ENCODE measurements at regions of chr7 and their contacts with region 1.

Region 1: DNA sequence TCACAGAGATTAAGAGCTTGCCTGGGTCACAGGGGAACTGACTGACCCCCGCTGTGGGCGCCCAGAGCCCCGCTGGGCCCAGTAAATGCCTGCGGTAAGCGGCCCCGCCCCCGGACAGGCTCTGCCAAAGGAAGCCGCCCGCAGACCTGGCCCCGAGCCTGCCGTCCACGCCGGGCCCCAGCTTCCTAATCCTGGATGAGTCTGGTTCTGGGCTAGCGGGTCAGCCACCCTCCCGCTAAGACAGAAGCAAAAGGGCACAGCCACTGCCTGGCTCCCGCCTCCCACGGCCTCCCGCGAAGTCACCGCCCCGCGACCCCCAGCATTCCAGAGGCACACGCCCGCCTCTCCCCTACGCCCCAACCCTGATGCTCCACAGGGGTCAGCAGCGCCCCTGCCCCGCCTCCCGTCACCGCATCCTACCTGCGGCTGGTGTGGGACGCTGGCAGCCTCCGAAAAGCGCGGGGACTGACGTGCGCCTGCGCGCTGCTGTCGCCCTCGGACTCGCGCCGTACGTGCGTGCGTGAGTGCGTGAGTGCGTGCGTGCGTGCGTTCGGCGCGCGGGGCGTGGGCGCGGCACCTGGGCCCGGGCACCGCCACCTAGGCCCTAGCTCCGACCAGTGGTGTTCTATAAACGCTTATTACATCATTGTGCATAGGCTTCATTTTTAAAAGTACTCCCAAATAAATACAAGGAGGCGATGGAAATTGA is at the start of gene FIGNL1:
- DNase-seq: peak; percentile 92
- ATAC-seq: peak; percentile 87
- H3K4me3 Mint-ChIP-seq: peak within 1 kb of the TSS; percentile 70
- H3K27ac Mint-ChIP-seq: peak within 1 kb of the TSS; percentile 93
- H3K4me1 Mint-ChIP-seq: peaks cover 46% of the 10 kb centered on the region
- H3K27me3 Mint-ChIP-seq: no peaks in the 10 kb centered on the region
- total RNA-seq, gene FIGNL1: 46.9 to 49.3 TPM

Region 2: DNA sequence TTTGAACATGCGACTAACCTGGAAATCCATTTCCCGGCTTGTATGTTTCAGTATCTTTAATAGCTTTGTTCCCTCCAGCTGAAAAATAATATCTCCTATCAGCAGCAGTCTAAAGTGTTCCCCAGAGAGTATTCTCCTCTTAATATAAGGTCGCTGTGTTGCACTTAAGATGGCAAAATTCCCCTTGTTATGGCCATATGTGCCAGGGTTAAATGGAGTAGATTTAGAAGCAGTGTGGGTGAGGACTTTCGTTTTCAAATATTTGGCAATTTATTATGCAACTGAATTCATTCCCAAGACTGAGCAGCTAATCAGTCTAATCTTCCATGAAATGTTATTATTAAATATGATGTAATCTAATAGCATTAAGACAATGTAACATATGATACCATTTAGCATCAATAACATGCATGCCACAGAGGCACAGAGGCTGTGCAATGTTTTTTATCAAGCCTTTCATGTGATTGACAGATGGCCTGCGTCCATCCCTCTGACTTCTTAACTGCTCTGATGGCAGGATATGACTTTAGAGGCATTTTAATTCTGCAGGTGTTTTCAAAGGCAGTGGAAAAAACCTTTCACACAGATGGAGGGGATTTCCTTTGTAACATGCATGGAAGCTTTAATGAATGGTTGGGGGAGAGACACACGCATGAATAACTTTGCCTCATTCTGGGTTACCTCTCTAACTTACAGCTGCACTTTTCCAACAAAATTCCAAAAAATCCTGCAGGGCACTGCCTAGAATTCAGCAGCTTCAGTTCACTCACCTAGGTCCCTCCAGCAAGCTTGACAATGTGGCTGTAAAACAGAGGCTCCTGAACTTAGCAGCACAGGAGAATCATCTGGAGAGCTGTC is 301.9 kb before region 1 on chr7:
- CTCF ChIA-PET with region 1: interaction called, 5 read pairs
- POLR2A ChIA-PET with region 1: interaction called, 3 read pairs
- intact Hi-C with region 1: loop called (anchors 2 to 10 kb)
- DNase-seq: peak; percentile 65
- ATAC-seq: peak; percentile 89
- H3K4me3 Mint-ChIP-seq: peak overlapping the region; percentile 40
- H3K27ac Mint-ChIP-seq: peak overlapping the region; percentile 90
- H3K4me1 Mint-ChIP-seq: peaks cover 85% of the 10 kb centered on the region
- H3K27me3 Mint-ChIP-seq: no peaks in the 10 kb centered on the region

Region 3: GRCh38 chr7:50266635-50267386 is 183.2 kb before region 1 on chr7:
- CTCF ChIA-PET with region 1: interaction called, 3 read pairs
- POLR2A ChIA-PET with region 1: no interaction called
- intact Hi-C with region 1: loop called in 1 of 2 experiments (anchors 2 kb)
- DNase-seq: peak; percentile 87
- ATAC-seq: peak; percentile 77
- H3K4me3 Mint-ChIP-seq: peak overlapping the region; percentile 58
- H3K27ac Mint-ChIP-seq: peak overlapping the region; percentile 98
- H3K4me1 Mint-ChIP-seq: peaks cover 94% of the 10 kb centered on the region
- H3K27me3 Mint-ChIP-seq: no peaks in the 10 kb centered on the region

Region 4: DNA sequence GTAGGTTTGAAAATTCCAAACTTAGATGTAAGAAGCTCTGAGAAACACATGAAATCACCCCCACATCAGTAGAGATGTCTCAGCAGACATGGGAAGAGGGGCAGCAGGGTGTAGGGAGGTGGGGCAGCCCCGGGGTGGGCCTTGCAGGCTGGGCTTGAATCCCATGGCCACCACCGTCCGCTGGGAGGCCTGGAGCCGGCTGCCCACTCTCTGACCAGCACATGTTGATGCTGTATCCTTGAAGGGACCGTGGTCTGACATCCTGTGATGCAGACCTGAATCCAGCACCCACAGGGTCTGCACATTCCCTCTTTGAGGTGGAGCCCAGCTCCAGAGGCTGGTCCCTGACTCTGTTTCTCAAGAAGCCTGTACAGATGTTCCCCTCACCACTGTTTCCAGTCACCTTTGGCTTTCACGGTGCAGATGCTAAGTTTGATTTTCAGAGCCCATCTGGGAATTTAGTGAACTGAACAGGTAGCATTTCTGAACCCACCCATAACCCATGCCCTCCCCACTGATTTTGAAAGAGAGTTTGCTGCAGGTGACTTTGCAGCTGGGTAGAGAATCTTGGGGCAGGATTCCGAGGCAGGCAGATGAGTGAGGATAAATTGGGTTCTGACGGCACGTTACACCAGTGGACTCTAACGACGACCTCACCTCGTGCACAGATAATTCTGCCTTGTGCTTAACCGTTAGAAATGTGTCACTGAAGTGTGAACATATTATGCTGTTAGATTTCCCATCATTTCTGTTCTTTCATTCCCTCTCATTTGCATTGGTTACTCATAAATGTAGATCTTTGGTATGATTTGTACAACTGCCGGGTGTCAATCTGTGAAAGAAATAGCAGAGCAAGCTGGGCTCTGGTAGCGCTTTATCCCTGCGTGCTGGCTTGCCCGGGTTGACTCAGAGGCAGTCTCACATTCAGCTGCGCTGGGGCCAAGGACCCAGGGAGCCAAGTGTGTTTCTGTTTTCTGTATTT is 99.8 kb before region 1 on chr7:
- CTCF ChIA-PET with region 1: interaction called, 3 read pairs
- POLR2A ChIA-PET with region 1: no interaction called
- intact Hi-C with region 1: loop called in 1 of 2 experiments (anchors 1 kb)
- DNase-seq: peak; percentile 93
- ATAC-seq: peak; percentile 71
- H3K4me3 Mint-ChIP-seq: peak overlapping the region; percentile 61
- H3K27ac Mint-ChIP-seq: peak overlapping the region; percentile 100
- H3K4me1 Mint-ChIP-seq: peaks cover 97% of the 10 kb centered on the region
- H3K27me3 Mint-ChIP-seq: no peaks in the 10 kb centered on the region

Region 5: GRCh38 chr7:50467817-50468610 is 18.0 kb after region 1 on chr7:
- CTCF ChIA-PET with region 1: interaction called, 7 read pairs
- POLR2A ChIA-PET with region 1: no interaction called
- intact Hi-C with region 1: loop called in 1 of 2 experiments (anchors 2 kb)
- DNase-seq: peak; percentile 92
- ATAC-seq: peak; percentile 95
- H3K4me3 Mint-ChIP-seq: peak overlapping the region; percentile 11
- H3K27ac Mint-ChIP-seq: peak overlapping the region; percentile 59
- H3K4me1 Mint-ChIP-seq: peaks cover 13% of the 10 kb centered on the region
- H3K27me3 Mint-ChIP-seq: peaks cover 5% of the 10 kb centered on the region

Region 6: GRCh38 chr7:51123322-51124029 is 673.4 kb after region 1 on chr7:
- CTCF ChIA-PET with region 1: no interaction called
- POLR2A ChIA-PET with region 1: no interaction called
- intact Hi-C with region 1: loop called (anchors 1 to 5 kb)
- DNase-seq: peak; percentile 92
- ATAC-seq: peak; percentile 99
- H3K4me3 Mint-ChIP-seq: peak overlapping the region; percentile 10
- H3K27ac Mint-ChIP-seq: peak overlapping the region; percentile 88
- H3K4me1 Mint-ChIP-seq: peaks cover 40% of the 10 kb centered on the region
- H3K27me3 Mint-ChIP-seq: no peaks in the 10 kb centered on the region

Measured in activated CD4-positive, alpha-beta T cell treated with anti-CD3 and anti-CD28 coated beads for 36 hours (primary cell).